ENCODE measurements at regions of chr15 and their contacts with region 1.

Region 1: DNA sequence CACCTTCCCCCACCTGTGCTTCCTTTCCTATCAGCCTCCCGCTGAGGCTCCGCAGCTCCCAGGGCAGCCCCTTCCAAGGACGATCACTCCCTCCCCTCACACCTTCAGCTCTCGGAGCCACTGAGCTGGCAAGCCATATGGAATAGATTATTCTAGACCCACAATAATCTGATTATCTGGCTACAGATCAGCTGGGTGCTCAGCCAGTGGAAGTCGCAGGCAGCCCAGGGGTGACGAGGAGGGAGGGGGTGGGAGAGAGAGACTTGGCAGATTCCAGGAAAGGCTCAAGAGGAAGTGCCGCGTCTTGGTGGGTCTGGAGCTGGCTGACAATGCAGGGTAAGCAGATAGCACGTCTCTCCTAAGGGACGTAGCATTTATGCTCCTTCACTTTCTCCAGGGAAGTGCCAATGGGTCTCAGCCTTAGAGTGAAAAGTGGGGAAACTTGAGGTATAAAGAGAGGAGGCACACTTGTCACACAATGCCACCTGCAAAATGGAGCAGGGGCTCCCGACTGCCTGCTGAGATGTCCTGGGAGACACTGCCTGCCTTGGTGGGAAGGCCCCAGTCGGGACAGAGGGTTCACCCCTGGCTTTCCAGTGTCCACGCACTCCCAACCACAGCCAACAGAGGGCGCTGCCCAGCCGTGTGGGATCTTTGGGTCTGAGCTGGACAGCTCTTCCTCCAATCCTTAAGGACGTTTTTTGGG is 9.4 kb upstream of the MESP1 start:
- DNase-seq: peak; percentile 95

Region 2: GRCh38 chr15:89874926-89875564 is 114.6 kb after region 1 on chr15:
- intact Hi-C with region 1: loop called (anchors 2 to 5 kb)
- DNase-seq: peak; percentile 94

Measured in posterior vena cava (tissue), 2 donors.